ENCODE measurements at regions of chr17 and their contacts with region 1.

Region 1: DNA sequence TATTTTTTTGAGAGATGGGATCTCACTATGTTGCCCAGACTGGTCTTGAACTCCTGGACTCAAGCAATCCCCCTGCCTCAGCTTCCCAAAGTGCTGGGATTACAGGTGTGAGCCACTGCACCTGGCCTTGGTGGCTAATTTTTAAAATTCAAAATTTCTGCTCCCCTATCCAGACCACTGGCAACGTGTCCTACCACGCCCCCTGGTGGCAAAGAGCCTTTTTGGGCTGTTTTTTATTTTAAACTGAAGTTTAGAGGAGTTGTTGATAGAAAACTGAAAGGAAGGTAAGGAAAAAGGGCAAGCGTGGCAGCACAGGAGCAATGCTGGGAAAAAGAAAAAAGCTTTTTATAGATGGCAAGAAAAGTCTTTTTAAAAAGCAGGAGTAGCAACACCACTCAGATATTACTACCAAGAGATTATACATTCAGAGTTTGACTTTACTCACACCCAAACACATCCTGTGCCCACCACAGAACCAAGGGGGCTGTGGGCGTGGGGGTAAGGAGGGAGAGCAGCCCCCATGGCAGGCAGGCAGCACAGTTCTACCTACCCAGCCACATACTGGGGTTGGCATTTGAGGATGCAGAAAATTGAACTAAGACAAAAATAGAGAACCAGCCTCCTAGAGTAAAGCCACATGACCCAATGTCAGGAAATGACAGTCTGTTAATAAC is 4.2 kb upstream of the MXRA7 start:
- DNase-seq: peak; percentile 87
- ATAC-seq: peak; percentile 11
- H3K4me3 ChIP-seq: no peak overlapping the region
- H3K27ac ChIP-seq: no peak overlapping the region
- H3K4me1 ChIP-seq: peaks cover 11% of the 10 kb centered on the region
- H3K27me3 ChIP-seq: no peaks in the 10 kb centered on the region
- CTCF ChIP-seq: peak; percentile 96

Region 2: DNA sequence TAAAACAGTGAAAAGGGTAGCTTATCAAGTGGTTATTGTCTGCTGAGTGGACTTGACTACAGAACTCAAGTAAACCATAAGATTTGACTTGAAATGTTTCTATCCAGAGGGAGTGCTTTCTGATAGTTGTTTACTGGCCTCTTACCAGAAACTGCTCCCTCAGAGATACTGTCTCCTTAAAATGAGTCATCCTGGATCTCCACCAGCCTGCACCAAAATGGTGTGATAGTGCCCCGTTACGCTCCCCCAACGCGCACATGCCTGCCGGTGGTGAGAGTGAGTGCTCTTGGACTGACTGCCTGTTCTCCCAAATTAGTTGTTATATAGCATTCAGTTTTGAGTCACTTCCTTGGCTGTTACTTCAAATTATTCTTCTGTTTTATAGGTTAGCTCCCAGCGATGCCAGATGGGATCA is 152.2 kb before region 1 on chr17:
- CTCF ChIA-PET with region 1: no interaction called
- POLR2A ChIA-PET with region 1: no interaction called
- intact Hi-C with region 1: loop called (anchors 10 kb)
- DNase-seq: peak; percentile 81
- ATAC-seq: peak; percentile 65
- H3K4me3 ChIP-seq: peak overlapping the region; percentile 15; the same call in 1 of the 2 replicates
- H3K27ac ChIP-seq: peak overlapping the region; percentile 82
- H3K4me1 ChIP-seq: peaks cover 60% of the 10 kb centered on the region
- H3K27me3 ChIP-seq: no peaks in the 10 kb centered on the region
- CTCF ChIP-seq: no peak

Region 3: DNA sequence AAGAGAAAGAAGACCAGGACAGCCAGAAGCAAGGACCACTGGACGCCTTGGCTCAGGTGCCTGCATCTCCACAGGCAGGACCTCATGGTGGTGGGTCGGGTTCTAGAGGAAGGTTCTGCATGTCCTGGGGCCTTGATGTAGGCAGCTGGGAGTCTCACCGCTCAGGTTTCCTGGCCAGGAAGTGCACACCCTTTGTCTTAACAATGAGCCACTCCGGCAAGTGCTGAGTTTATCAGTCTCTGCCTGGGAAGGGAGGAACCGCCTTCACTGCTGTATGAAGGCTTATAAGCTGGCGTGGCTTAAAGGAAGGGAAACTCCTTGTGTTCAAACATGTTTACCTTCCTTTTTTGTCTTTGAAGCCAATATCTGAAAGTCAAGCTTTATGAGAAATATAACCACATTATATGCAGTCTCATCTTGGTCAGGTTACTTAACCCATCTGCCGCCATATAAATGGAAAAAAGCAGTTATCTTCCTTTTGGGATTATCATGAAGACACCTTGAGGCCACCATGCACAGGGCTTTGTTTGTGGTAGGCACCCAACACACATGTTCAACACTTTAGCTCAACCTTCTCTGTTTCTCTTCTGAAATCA is 71.3 kb before region 1 on chr17 and contains the start of gene ST6GALNAC1:
- CTCF ChIA-PET with region 1: no interaction called
- POLR2A ChIA-PET with region 1: no interaction called
- intact Hi-C with region 1: loop called (anchors 10 kb)
- DNase-seq: peak; percentile 65
- ATAC-seq: peak; percentile 86
- H3K4me3 ChIP-seq: no peak within 1 kb of the TSS
- H3K27ac ChIP-seq: peak within 1 kb of the TSS; percentile 31
- H3K4me1 ChIP-seq: peaks cover 28% of the 10 kb centered on the region
- H3K27me3 ChIP-seq: no peaks in the 10 kb centered on the region
- CTCF ChIP-seq: no peak
- total RNA-seq, gene ST6GALNAC1: 2.6 and 4.1 TPM in 2 replicates

Region 4: DNA sequence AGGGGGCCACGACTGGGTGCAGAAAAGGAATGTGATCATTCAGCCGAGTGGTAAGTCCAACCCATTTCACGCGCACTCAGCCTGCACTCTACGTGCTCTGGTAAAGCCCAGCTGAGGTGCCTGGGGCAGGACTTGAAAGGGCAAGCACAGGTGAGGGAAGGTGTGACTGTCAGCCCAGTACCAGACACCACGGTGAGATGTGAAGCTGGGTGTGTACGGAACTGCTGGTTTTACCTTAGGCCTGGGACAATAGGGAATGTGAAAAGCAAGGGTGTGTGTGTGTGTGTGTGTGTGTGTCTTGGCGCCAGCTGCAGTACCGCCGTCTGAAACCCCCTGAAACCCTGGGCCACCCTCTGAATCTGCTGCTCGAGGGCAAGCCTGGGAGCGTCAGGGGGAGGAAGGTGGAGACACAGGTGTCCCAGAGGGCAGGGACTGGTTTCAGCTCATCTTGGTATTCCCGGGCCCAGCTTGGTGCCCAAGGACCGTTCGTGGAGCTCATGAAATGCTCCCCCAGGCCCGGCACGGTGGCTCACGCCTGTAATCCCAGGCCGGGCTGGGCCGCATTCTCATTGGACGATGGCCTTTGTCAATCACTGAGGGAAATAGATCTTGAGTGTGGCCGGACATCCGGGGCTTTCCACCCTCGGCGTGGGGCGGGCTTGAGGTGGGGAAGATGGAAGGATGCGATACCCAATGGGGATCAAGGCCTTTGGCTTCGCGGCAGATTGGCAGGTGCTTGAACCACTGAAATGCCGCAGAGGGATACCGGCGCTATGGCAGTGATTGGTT is 43.6 kb before region 1 on chr17:
- CTCF ChIA-PET with region 1: no interaction called
- POLR2A ChIA-PET with region 1: no interaction called
- intact Hi-C with region 1: loop called (anchors 5 kb)
- DNase-seq: peak; percentile 100
- ATAC-seq: peak; percentile 99
- H3K4me3 ChIP-seq: peak overlapping the region; percentile 72
- H3K27ac ChIP-seq: no peak overlapping the region
- H3K4me1 ChIP-seq: peaks cover 14% of the 10 kb centered on the region
- H3K27me3 ChIP-seq: no peaks in the 10 kb centered on the region
- CTCF ChIP-seq: no peak

Region 5: GRCh38 chr17:76687308-76688164 is 27.4 kb before region 1 on chr17:
- CTCF ChIA-PET with region 1: interaction called, 5 read pairs
- POLR2A ChIA-PET with region 1: interaction called, 3 read pairs
- intact Hi-C with region 1: loop called (anchors 1 kb)
- DNase-seq: no peak
- ATAC-seq: no peak
- H3K4me3 ChIP-seq: no peak overlapping the region; the same call in 1 of the 2 replicates
- H3K27ac ChIP-seq: peak overlapping the region; percentile 80; the same call in 1 of the 2 replicates
- H3K4me1 ChIP-seq: peaks cover 17% of the 10 kb centered on the region
- H3K27me3 ChIP-seq: no peaks in the 10 kb centered on the region
- CTCF ChIP-seq: no peak

Measured in PC-3 (cell line).